ENCODE measurements at regions of chr5 and their contacts with region 1.

Region 1: GRCh38 chr5:143435210-143435657 is 31.7 kb upstream of the NR3C1 start:
- DNase-seq: peak; percentile 88
- ATAC-seq: peak; percentile 85
- H3K4me3 ChIP-seq: peak overlapping the region; percentile 42 to 81 (median 68)
- H3K4me3 Mint-ChIP-seq: peak overlapping the region; percentile 94
- H3K27ac ChIP-seq: peak overlapping the region; percentile 90 to 93
- H3K27ac Mint-ChIP-seq: peak overlapping the region; percentile 97
- H3K4me1 ChIP-seq: peaks cover 28 to 31% of the 10 kb centered on the region in 2 donors
- H3K4me1 Mint-ChIP-seq: peaks cover 65% of the 10 kb centered on the region
- H3K27me3 ChIP-seq: no peaks in the 10 kb centered on the region
- H3K27me3 Mint-ChIP-seq: no peaks in the 10 kb centered on the region
- CTCF ChIP-seq: no peak

Region 2: DNA sequence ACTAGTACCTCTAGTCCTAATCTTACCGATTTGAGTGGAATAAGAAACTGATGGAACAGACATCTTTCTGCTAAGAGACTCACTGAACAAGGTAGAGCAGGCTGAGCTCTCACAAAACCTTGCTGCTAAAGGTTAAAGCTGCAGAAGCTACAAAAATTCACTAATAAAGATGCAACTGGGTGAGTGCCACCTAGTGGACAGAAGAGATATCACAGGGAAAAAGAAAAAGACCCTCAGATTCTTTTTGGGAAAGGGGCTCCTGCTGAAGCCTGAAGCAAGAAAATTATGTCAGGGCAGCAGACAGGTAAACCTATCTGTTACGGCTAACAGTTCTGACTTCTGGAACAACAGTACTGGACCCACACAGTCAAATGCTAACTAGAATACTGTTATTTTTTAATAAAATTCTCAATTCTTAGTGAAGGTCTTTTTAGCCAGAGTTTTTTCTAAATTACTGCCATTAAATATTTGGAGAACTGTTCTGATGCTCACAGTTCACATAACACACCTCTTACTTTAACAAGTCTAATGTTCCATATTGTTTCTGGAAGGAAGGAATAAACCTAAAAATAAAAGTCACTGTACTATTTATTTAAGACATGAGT is 1867.6 kb before region 1 on chr5:
- CTCF ChIA-PET with region 1: no interaction called
- POLR2A ChIA-PET with region 1: no interaction called
- intact Hi-C with region 1: no loop called
- DNase-seq: peak; percentile 50
- ATAC-seq: no peak
- H3K4me3 ChIP-seq: no peak overlapping the region
- H3K4me3 Mint-ChIP-seq: no peak overlapping the region
- H3K27ac ChIP-seq: no peak overlapping the region
- H3K27ac Mint-ChIP-seq: no peak overlapping the region
- H3K4me1 ChIP-seq: peaks cover 11% of the 10 kb centered on the region in 2 donors
- H3K4me1 Mint-ChIP-seq: peaks cover 17% of the 10 kb centered on the region
- H3K27me3 ChIP-seq: no peaks in the 10 kb centered on the region
- H3K27me3 Mint-ChIP-seq: no peaks in the 10 kb centered on the region
- CTCF ChIP-seq: peak; percentile 97

Region 3: GRCh38 chr5:143413958-143414669 is 21.1 kb before region 1 on chr5:
- CTCF ChIA-PET with region 1: interaction called, 20 read pairs
- POLR2A ChIA-PET with region 1: interaction called, 5 read pairs
- intact Hi-C with region 1: loop called (anchors 1 kb)
- DNase-seq: peak; percentile 42
- ATAC-seq: peak; percentile 65
- H3K4me3 ChIP-seq: peak overlapping the region in 1 of 5 experiments; percentile 12
- H3K4me3 Mint-ChIP-seq: peak overlapping the region; percentile 58
- H3K27ac ChIP-seq: no peak overlapping the region
- H3K27ac Mint-ChIP-seq: peak overlapping the region; percentile 60
- H3K4me1 ChIP-seq: peaks cover 14 to 15% of the 10 kb centered on the region in 2 donors
- H3K4me1 Mint-ChIP-seq: peaks cover 36% of the 10 kb centered on the region
- H3K27me3 ChIP-seq: no peaks in the 10 kb centered on the region
- H3K27me3 Mint-ChIP-seq: no peaks in the 10 kb centered on the region
- CTCF ChIP-seq: no peak

Region 4: DNA sequence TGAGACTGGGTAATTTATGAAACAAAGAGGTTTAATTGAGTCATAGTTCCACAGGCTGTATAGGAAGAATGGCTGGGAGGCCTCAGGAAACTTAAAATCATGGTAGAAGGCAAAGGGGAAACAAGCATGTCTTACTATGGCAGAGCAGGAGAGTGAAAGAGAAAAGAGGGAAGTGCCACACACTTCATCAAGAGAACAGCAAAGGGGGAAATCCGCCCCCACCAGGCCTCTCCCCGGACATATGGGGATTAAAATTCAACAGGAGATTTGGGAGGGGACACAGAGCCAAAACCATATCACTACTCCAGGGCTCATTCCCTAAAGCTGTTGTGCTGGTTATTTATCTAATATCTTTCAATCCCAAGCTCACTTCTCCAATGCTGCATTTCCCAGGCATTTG is 18.5 kb after region 1 on chr5:
- CTCF ChIA-PET with region 1: no interaction called
- POLR2A ChIA-PET with region 1: no interaction called
- intact Hi-C with region 1: no loop called
- DNase-seq: peak; percentile 47
- ATAC-seq: peak; percentile 39
- H3K4me3 ChIP-seq: no peak overlapping the region
- H3K4me3 Mint-ChIP-seq: no peak overlapping the region
- H3K27ac ChIP-seq: no peak overlapping the region
- H3K27ac Mint-ChIP-seq: peak overlapping the region; percentile 34
- H3K4me1 ChIP-seq: peaks cover 3 to 8% of the 10 kb centered on the region in 2 donors
- H3K4me1 Mint-ChIP-seq: peaks cover 5% of the 10 kb centered on the region
- H3K27me3 ChIP-seq: no peaks in the 10 kb centered on the region
- H3K27me3 Mint-ChIP-seq: no peaks in the 10 kb centered on the region
- CTCF ChIP-seq: no peak

Region 5: GRCh38 chr5:143471041-143471521 is 35.8 kb after region 1 on chr5:
- CTCF ChIA-PET with region 1: no interaction called
- POLR2A ChIA-PET with region 1: no interaction called
- intact Hi-C with region 1: loop called (anchors 5 kb)
- DNase-seq: no peak
- ATAC-seq: no peak
- H3K4me3 ChIP-seq: no peak overlapping the region
- H3K4me3 Mint-ChIP-seq: no peak overlapping the region
- H3K27ac ChIP-seq: no peak overlapping the region
- H3K27ac Mint-ChIP-seq: no peak overlapping the region
- H3K4me1 ChIP-seq: no peaks in the 10 kb centered on the region
- H3K4me1 Mint-ChIP-seq: no peaks in the 10 kb centered on the region
- H3K27me3 ChIP-seq: no peaks in the 10 kb centered on the region
- H3K27me3 Mint-ChIP-seq: no peaks in the 10 kb centered on the region
- CTCF ChIP-seq: no peak

Region 6: GRCh38 chr5:143564417-143564816 is 129.2 kb after region 1 on chr5:
- CTCF ChIA-PET with region 1: no interaction called
- POLR2A ChIA-PET with region 1: no interaction called
- intact Hi-C with region 1: loop called (anchors 2 kb)
- DNase-seq: peak; percentile 66
- ATAC-seq: peak; percentile 92
- H3K4me3 ChIP-seq: no peak overlapping the region
- H3K4me3 Mint-ChIP-seq: no peak overlapping the region
- H3K27ac ChIP-seq: no peak overlapping the region
- H3K27ac Mint-ChIP-seq: no peak overlapping the region
- H3K4me1 ChIP-seq: peaks cover 4 to 13% of the 10 kb centered on the region in 2 donors
- H3K4me1 Mint-ChIP-seq: peaks cover 21% of the 10 kb centered on the region
- H3K27me3 ChIP-seq: no peaks in the 10 kb centered on the region
- H3K27me3 Mint-ChIP-seq: no peaks in the 10 kb centered on the region
- CTCF ChIP-seq: no peak

Measured in B cell (primary cell).